K562 (cell line): ENCODE measurements at regions of chr3 and their contacts with region 1.

Region 1: DNA sequence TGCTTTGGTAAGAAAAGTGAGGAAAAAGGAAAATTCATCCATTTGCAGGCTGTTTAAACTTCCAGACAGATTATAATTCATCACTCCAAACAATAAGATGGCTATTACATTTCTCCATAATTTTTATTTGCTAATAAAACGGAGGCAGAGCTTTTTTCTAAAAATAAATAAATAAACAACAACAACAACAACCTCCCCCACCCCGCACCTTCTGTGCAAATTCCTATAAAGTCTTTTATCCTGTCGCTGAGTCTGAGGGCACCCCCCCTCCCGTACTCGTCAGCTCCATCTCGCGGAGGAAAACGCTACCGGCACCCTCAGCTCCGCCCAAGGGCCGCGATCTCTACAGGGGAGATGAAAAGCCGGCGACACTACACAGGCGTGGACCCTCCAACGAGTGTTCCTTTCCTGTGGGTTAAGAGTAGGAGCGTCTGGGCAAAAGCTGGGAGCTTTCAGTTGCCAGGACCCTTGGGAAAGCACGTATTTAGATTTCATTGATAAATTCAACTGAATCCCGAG is 1.0 kb upstream of the ATP1B3 start:
- DNase-seq: peak; percentile 82 to 91 (median 86)
- ATAC-seq: peak; percentile 84
- H3K4me3 ChIP-seq: peak overlapping the region; percentile 98
- H3K27ac ChIP-seq: peak overlapping the region; percentile 72
- H3K4me1 ChIP-seq: peaks cover 6 to 14% of the 10 kb centered on the region in 2 experiments; a peak in 2 of 5 replicates
- H3K27me3 ChIP-seq: no peaks in the 10 kb centered on the region
- CTCF ChIP-seq: peak; percentile 89 to 93 (median 90)
- EP300 ChIP-seq: 0 out of 2 replicates have a peak, but pooled peaks have one; percentile 23
- POLR2A ChIP-seq: no peak
- RAD21 ChIP-seq: peak; percentile 83 to 84

Region 2: DNA sequence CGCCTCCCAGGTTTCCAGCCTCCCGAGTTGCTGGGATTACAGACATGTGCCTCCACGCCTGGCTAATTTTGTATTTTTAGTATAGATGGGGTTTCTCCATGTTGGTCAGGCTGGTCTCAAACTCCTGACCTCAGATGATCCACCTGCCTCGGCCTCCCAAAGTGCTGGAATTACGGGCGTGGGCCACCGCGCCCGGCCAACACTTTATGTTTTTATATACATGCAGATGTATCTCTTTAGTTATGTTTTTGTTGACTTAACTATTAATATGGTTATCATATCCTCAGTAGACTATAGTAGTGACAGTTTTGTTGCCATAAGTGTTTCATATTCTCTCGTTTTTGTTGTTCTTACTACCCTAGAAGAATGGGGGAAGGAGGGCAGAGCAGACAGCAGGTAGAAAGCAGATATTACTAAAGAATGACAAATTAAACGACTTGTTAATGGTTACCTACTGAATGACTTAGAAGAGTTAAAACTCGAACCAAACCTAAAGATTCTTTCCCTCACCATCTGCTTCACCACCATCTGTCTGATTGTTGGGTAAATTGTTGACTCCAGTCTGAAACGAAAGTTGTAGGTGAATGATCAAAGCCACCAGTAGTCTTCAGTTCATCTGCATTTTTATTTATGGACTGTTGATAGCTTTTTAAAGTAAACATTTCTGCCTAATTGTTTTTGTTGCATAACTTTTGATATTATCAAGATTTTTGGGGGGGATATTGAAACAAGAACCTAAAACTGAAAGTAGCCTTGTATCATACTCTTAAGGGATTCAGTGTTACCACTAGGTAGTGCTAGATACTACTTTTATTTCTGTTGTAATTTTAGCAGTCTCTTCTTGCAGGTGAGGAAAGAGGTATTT is 299.3 kb before region 1 on chr3:
- CTCF ChIA-PET with region 1: no interaction called
- POLR2A ChIA-PET with region 1: no interaction called
- in situ Hi-C with region 1: no loop called
- intact Hi-C with region 1: no loop called
- DNase-seq: peak in 2 of 4 experiments; percentile 10 to 15
- ATAC-seq: peak; percentile 83
- H3K4me3 ChIP-seq: no peak overlapping the region
- H3K27ac ChIP-seq: no peak overlapping the region
- H3K4me1 ChIP-seq: no peaks in the 10 kb centered on the region
- H3K27me3 ChIP-seq: no peaks in the 10 kb centered on the region
- CTCF ChIP-seq: peak in 2 of 3 experiments; percentile 19 to 62; a peak in 4 of 6 replicates
- EP300 ChIP-seq: 0 out of 2 replicates have a peak, but pooled peaks have one; percentile 27
- POLR2A ChIP-seq: no peak
- RAD21 ChIP-seq: peak; percentile 66 to 68

Region 3: DNA sequence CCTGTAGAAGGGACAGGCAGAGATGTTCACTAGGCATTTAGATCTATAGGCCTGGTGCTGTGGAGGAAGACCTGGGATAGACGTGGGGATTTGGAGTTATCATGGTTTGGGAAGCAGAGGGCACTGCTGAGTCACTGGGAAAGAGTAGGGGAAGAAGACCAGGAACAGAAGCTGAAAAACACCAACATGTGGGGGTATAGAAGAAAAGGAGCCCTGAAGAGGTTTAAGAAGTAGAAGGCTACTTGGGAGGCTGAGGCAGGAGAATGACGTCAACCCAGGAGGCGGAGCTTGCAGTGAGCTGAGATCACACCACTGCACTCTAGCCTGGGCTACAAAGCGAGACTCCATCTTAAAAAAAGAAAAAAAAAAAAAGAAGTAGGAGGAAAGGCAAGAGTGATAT is 93.0 kb before region 1 on chr3:
- CTCF ChIA-PET with region 1: no interaction called
- POLR2A ChIA-PET with region 1: no interaction called
- in situ Hi-C with region 1: no loop called
- intact Hi-C with region 1: loop called (anchors 5 kb)
- DNase-seq: peak in 2 of 4 experiments; percentile 23 to 30
- ATAC-seq: peak; percentile 55
- H3K4me3 ChIP-seq: no peak overlapping the region
- H3K27ac ChIP-seq: no peak overlapping the region
- H3K4me1 ChIP-seq: peaks cover 0 to 6% of the 10 kb centered on the region in 2 experiments; a peak in 3 of 5 replicates
- H3K27me3 ChIP-seq: no peaks in the 10 kb centered on the region
- CTCF ChIP-seq: peak in 2 of 3 experiments; percentile 8 to 55; a peak in 2 of 6 replicates
- EP300 ChIP-seq: no peak
- POLR2A ChIP-seq: no peak
- RAD21 ChIP-seq: peak; percentile 43 to 64

Region 4: GRCh38 chr3:141845407-141846049 is 29.9 kb before region 1 on chr3:
- CTCF ChIA-PET with region 1: no interaction called
- POLR2A ChIA-PET with region 1: interaction called, 4 read pairs
- in situ Hi-C with region 1: no loop called
- intact Hi-C with region 1: loop called (anchors 2 kb)
- DNase-seq: peak in 2 of 4 experiments; percentile 21 to 57
- ATAC-seq: peak; percentile 20; the same call in 2 of the 3 replicates
- H3K4me3 ChIP-seq: no peak overlapping the region
- H3K27ac ChIP-seq: no peak overlapping the region
- H3K4me1 ChIP-seq: peaks cover 22 to 27% of the 10 kb centered on the region in 2 experiments; a peak in 4 of 5 replicates
- H3K27me3 ChIP-seq: no peaks in the 10 kb centered on the region
- CTCF ChIP-seq: peak; percentile 38 to 51 (median 46)
- EP300 ChIP-seq: no peak
- POLR2A ChIP-seq: no peak
- RAD21 ChIP-seq: peak in 1 of 2 experiments; percentile 52; a peak in 2 of 4 replicates

Region 5: DNA sequence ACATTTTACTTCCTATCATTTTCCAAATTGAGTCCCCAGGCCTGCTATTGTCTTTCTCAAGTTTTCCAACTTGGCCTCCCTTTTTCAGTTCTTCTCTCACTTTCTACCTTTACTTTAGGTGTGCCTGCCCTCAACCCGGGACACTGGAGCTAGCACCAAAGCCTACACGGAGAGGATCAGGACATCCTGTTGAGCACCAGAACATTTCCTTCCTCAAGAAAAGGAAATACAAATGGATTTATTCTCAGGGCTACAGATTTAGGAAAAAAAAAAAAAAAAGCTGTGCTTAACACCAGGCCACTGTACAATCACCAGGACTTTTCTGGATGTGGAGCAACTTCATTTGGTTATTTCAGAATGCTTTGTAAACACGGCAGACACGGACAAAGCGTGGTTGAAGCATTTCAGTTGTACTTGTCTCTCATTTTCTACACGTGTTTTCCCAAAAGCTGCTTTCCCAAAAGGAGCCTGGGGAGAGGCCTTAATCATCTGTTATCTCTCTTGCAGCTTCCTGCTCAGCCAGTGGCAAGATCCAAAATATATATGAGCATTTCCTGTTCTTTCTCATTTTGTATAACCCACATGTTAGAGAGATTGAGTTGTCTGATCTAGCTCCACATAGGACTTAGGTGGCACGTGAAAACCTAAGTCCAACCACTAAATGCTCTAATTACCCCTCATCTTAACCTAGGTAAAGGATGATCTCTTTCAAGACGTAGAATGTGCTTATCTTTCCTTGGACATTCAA is 14.5 kb before region 1 on chr3:
- CTCF ChIA-PET with region 1: no interaction called
- POLR2A ChIA-PET with region 1: interaction called, 12 read pairs
- in situ Hi-C with region 1: no loop called
- intact Hi-C with region 1: no loop called
- DNase-seq: peak in 2 of 4 experiments; percentile 31 to 47
- ATAC-seq: peak; percentile 61
- H3K4me3 ChIP-seq: no peak overlapping the region
- H3K27ac ChIP-seq: peak overlapping the region; percentile 35; the same call in 2 of the 3 replicates
- H3K4me1 ChIP-seq: peaks cover 0 to 35% of the 10 kb centered on the region in 2 experiments; a peak in 4 of 5 replicates
- H3K27me3 ChIP-seq: no peaks in the 10 kb centered on the region
- CTCF ChIP-seq: no peak
- EP300 ChIP-seq: peak; percentile 55; the same call in 1 of the 2 replicates
- POLR2A ChIP-seq: no peak
- RAD21 ChIP-seq: no peak

Region 6: DNA sequence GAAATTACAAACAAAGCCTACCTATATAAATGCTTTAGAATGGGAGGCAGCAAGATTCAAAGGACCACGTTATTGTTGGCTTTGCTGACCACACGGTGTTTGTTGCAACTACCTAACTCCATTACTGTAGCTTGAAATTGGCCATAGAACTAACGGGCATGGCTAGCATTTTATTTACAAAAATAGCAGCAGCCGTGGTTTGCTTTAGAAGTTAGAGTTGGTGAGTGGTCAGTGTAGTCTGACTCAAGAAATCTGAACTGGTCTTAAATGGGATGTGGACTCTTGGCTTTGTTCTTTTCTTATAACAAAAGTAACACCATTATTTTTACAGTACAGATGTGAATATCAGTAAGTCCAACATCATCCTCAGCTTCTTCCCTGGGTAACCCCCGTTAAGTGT is 11.6 kb after region 1 on chr3:
- CTCF ChIA-PET with region 1: no interaction called
- POLR2A ChIA-PET with region 1: interaction called, 26 read pairs
- in situ Hi-C with region 1: no loop called
- intact Hi-C with region 1: no loop called
- DNase-seq: no peak
- ATAC-seq: no peak
- H3K4me3 ChIP-seq: no peak overlapping the region
- H3K27ac ChIP-seq: no peak overlapping the region
- H3K4me1 ChIP-seq: peaks cover 0 to 5% of the 10 kb centered on the region in 2 experiments; a peak in 3 of 5 replicates
- H3K27me3 ChIP-seq: no peaks in the 10 kb centered on the region
- CTCF ChIP-seq: no peak
- EP300 ChIP-seq: no peak
- POLR2A ChIP-seq: no peak
- RAD21 ChIP-seq: no peak

Region 7: DNA sequence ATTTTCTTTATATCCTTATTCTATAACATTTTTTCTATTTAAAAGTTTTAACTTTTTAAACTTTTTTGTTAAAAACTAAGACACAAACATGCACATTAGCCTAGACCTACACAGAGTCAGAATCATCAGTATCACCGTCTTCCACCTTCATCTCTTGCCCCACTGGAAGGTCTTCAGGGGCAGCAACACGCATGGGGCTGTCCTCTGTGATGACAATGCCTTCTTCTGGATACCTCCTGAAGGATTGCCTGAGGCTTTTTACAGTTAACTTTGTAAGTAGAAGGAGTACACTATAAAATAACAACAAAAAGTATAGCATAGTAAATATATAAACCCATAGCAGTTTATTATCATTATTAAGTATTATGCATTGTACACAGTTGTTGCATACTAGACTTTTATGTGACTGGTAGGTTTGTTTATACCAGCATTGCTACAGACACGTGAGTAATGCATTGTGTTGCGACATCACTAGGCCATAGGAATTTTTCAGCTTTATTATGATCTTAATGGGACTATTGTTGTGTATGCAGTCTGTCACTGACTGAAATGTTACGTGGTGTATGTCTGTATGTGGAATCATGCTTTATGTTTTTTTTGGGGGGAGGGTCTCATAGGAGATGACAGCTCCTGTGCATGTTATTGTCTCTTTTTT is 19.2 kb after region 1 on chr3:
- CTCF ChIA-PET with region 1: no interaction called
- POLR2A ChIA-PET with region 1: interaction called, 12 read pairs
- in situ Hi-C with region 1: no loop called
- intact Hi-C with region 1: no loop called
- DNase-seq: no peak
- ATAC-seq: no peak; the same call in 1 of the 3 replicates
- H3K4me3 ChIP-seq: no peak overlapping the region
- H3K27ac ChIP-seq: no peak overlapping the region; the same call in 2 of the 3 replicates
- H3K4me1 ChIP-seq: no peaks in the 10 kb centered on the region
- H3K27me3 ChIP-seq: no peaks in the 10 kb centered on the region
- CTCF ChIP-seq: no peak
- EP300 ChIP-seq: no peak
- POLR2A ChIP-seq: no peak
- RAD21 ChIP-seq: no peak

Region 8: GRCh38 chr3:141913150-141913811 is 37.8 kb after region 1 on chr3:
- CTCF ChIA-PET with region 1: no interaction called
- POLR2A ChIA-PET with region 1: no interaction called
- in situ Hi-C with region 1: no loop called
- intact Hi-C with region 1: loop called (anchors 5 kb)
- DNase-seq: peak; percentile 50 to 72 (median 54)
- ATAC-seq: peak; percentile 82
- H3K4me3 ChIP-seq: no peak overlapping the region
- H3K27ac ChIP-seq: no peak overlapping the region
- H3K4me1 ChIP-seq: no peaks in the 10 kb centered on the region
- H3K27me3 ChIP-seq: no peaks in the 10 kb centered on the region
- CTCF ChIP-seq: peak; percentile 49 to 67 (median 62)
- EP300 ChIP-seq: no peak
- POLR2A ChIP-seq: no peak
- RAD21 ChIP-seq: peak; percentile 51 to 81